ENCODE measurements at regions of chr19 and their contacts with region 1.

Region 1: GRCh38 chr19:47436712-47437401 is 17.5 kb upstream of the MEIS3 start:
- DNase-seq: peak; percentile 68 to 94 (median 82)
- H3K4me3 ChIP-seq: no peak overlapping the region
- H3K27ac ChIP-seq: no peak overlapping the region
- H3K4me1 ChIP-seq: no peaks in the 10 kb centered on the region
- H3K27me3 ChIP-seq: peaks cover 40% of the 10 kb centered on the region
- CTCF ChIP-seq: peak; percentile 78 to 97 (median 92)
- POLR2A ChIP-seq: no peak

Region 2: DNA sequence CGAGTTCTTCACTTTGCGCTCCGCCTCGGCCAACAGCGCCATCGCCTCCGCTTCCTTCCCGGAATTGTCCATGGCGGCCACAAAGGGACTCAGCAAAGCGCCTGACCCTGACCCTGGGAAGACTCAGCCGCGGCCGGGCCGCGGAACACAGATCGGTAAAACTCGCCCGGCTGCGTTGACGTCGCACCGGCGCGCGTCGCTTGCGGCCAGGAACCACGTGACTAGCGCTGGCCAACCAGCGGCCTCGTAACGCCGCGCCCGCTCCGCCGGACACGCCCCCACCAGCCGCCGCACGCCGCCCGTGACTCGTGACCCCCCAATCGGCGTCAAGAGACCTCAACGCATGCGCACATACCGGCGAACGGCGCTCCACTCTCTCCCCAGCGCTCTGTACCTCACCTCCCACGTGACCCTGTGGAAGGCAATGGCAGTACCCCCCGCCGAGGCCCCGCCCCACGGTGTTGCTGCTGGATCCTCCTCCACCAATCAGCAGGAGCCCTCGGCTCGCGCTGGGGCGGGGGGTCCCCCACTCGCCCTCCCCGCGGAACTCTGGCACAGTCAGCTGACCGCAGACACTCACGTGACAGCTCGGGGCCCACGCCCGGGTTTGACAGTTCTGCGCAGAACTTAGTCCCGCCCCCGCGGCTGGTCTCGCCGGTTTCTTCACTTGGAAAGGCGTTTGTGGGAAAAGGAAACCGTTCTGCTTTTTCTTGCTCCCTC is 78.2 kb after region 1 on chr19 and contains the start of gene NAPA:
- intact Hi-C with region 1: loop called (anchors 5 kb)
- DNase-seq: peak; percentile 100
- H3K4me3 ChIP-seq: peak within 1 kb of the TSS; percentile 69 to 98 (median 86)
- H3K27ac ChIP-seq: peak within 1 kb of the TSS; percentile 96 to 100 (median 99)
- H3K4me1 ChIP-seq: peaks cover 37 to 45% of the 10 kb centered on the region in 2 donors
- H3K27me3 ChIP-seq: no peaks in the 10 kb centered on the region
- CTCF ChIP-seq: no peak
- POLR2A ChIP-seq: peak; percentile 97 to 98
- total RNA-seq, gene NAPA: 122 to 481 (median 265) TPM

Region 3: GRCh38 chr19:47523473-47523872 is 86.6 kb after region 1 on chr19:
- intact Hi-C with region 1: loop called (anchors 5 kb)
- DNase-seq: peak in 1 of 7 donors; percentile 37
- H3K4me3 ChIP-seq: no peak overlapping the region
- H3K27ac ChIP-seq: no peak overlapping the region
- H3K4me1 ChIP-seq: no peaks in the 10 kb centered on the region
- H3K27me3 ChIP-seq: no peaks in the 10 kb centered on the region
- CTCF ChIP-seq: no peak
- POLR2A ChIP-seq: no peak

Region 4: DNA sequence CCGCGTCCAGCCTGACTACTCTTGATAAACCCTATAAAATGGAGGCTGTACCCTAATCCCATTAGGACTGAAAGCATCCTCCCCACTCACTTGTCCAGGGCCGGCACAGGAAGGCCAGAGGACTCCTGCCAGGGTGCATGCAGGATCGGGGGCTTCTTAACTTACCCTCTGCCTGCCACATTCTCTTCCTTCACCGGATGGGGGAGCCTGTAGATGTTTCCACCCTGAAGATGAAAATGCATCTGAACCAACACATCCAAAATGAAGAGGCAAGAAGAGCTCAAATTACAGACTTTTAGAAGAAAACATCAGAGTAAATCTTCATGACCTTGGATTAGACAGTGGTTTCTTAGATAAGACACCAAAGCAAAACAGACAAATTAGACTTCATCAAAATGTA is 103.9 kb after region 1 on chr19:
- intact Hi-C with region 1: no loop called
- DNase-seq: peak in 4 of 7 donors; percentile 35 to 59 (median 40)
- H3K4me3 ChIP-seq: no peak overlapping the region
- H3K27ac ChIP-seq: peak overlapping the region in 3 of 5 donors; percentile 13 to 39 (median 25)
- H3K4me1 ChIP-seq: peaks cover 0 to 8% of the 10 kb centered on the region in 2 donors
- H3K27me3 ChIP-seq: peaks cover 7% of the 10 kb centered on the region
- CTCF ChIP-seq: peak in 5 of 6 experiments; percentile 14 to 46 (median 41)
- POLR2A ChIP-seq: no peak

Region 5: GRCh38 chr19:47582320-47582909 is 145.6 kb after region 1 on chr19:
- intact Hi-C with region 1: loop called in 1 of 2 experiments (anchors 10 kb)
- DNase-seq: peak in 4 of 7 donors; percentile 26 to 63 (median 58)
- H3K4me3 ChIP-seq: peak overlapping the region in 1 of 4 donors; percentile 7
- H3K27ac ChIP-seq: peak overlapping the region in 3 of 5 donors; percentile 40 to 54 (median 53)
- H3K4me1 ChIP-seq: peaks cover 0 to 6% of the 10 kb centered on the region in 2 donors
- H3K27me3 ChIP-seq: no peaks in the 10 kb centered on the region
- CTCF ChIP-seq: no peak
- POLR2A ChIP-seq: no peak

Region 6: GRCh38 chr19:47697863-47698609 is 261.2 kb after region 1 on chr19:
- intact Hi-C with region 1: loop called (anchors 2 kb)
- DNase-seq: peak; percentile 78 to 90 (median 87)
- H3K4me3 ChIP-seq: no peak overlapping the region
- H3K27ac ChIP-seq: peak overlapping the region; percentile 19 to 77 (median 50)
- H3K4me1 ChIP-seq: peaks cover 4 to 6% of the 10 kb centered on the region in 2 donors
- H3K27me3 ChIP-seq: no peaks in the 10 kb centered on the region
- CTCF ChIP-seq: peak; percentile 95 to 100 (median 99)
- POLR2A ChIP-seq: no peak